ENCODE measurements at regions of chr12 and their contacts with region 1.

Region 1: DNA sequence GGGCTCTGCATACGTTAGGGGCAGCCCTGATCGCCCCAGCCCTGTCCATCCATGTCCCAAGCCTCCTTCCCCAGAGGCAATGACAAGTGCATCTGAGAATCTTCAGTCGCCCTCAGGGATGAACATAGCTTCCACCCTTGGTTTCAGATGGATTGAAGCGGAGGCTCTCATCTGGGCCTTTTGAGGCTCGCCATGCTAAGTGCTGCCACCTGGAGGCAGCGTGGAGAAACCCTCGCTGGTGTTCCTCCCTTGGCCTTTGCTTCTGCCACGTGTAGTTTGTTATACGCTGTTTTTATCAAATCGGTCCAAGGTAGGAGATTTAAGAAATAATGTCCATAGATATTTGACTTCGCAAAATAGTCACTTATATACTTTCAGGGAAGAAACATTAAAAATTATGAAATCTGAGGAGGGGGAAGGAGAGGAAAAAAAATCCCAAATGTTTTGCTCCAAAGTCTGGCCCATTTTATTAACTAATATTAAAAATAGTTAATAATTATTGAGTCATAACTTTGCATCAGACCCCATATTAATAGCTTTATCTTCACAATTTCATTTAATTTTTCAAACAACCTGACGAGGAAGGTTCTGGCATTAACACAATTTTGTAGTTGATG is 28.8 kb upstream of the LRRC10 start:
- DNase-seq: peak; percentile 33
- ATAC-seq: peak; percentile 91
- H3K4me3 ChIP-seq: no peak overlapping the region
- H3K27ac ChIP-seq: no peak overlapping the region
- H3K4me1 ChIP-seq: no peaks in the 10 kb centered on the region
- H3K27me3 ChIP-seq: no peaks in the 10 kb centered on the region
- CTCF ChIP-seq: peak; percentile 94

Region 2: GRCh38 chr12:69719382-69720316 is 80.1 kb after region 1 on chr12:
- CTCF ChIA-PET with region 1: interaction called, 13 read pairs
- POLR2A ChIA-PET with region 1: no interaction called
- in situ Hi-C with region 1: no loop called
- intact Hi-C with region 1: no loop called
- DNase-seq: no peak
- ATAC-seq: no peak; the same call in 1 of the 2 replicates
- H3K4me3 ChIP-seq: no peak overlapping the region
- H3K27ac ChIP-seq: no peak overlapping the region
- H3K4me1 ChIP-seq: no peaks in the 10 kb centered on the region
- H3K27me3 ChIP-seq: no peaks in the 10 kb centered on the region
- CTCF ChIP-seq: no peak

Measured in Panc1 (cell line).